Activated naive CD4-positive, alpha-beta T cell treated with anti-CD3 and anti-CD28 coated beads for 36 hours (primary cell): ENCODE measurements at regions of chr17 and their contacts with region 1.

Region 1: GRCh38 chr17:44070455-44071197 is at the start of gene G6PC3:
- DNase-seq: peak; percentile 94
- H3K4me3 Mint-ChIP-seq: peak within 1 kb of the TSS; percentile 98
- H3K27ac Mint-ChIP-seq: peak within 1 kb of the TSS; percentile 96
- H3K4me1 Mint-ChIP-seq: peaks cover 42% of the 10 kb centered on the region
- H3K27me3 Mint-ChIP-seq: no peaks in the 10 kb centered on the region
- total RNA-seq, gene G6PC3: 15.9 to 19.4 TPM

Region 2: GRCh38 chr17:43517615-43518386 is 552.8 kb before region 1 on chr17:
- CTCF ChIA-PET with region 1: no interaction called
- intact Hi-C with region 1: no loop called
- DNase-seq: peak; percentile 35
- H3K4me3 Mint-ChIP-seq: no peak overlapping the region
- H3K27ac Mint-ChIP-seq: no peak overlapping the region
- H3K4me1 Mint-ChIP-seq: peaks cover 8% of the 10 kb centered on the region
- H3K27me3 Mint-ChIP-seq: no peaks in the 10 kb centered on the region

Region 3: DNA sequence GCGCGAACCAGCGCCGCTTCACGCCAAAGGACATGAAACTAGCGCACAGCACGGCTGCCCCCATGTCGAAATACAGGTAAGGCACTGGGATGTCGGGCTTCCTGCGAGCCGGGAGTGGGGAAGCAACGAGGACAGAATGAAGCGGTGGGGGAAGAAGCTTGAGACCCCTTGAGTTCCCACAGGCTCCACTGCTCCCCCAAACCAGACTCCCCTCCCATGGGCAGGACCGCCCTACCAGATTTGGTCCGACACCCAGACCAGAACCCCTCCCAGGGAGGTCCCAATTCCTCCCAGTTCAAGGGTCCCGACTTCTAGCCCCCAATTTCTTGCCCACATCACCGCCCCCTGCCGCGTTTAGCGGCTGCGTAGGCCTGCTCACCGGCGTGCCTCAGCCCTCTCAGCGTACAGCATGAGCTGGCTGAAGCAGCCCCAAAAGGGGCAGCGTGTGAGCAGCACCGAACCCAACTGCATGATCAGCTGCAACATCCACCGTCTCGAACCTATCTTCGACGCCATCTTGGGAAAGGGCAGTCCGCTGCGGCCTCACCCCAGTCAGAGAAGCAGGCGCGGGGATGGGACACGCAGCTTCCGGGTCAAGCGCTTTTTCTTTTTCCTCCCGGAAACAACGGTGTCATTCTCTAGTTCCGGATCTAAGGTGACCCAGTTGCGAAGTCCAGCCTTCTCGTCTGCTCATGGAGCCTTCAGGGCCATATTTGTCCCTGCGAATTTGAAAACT is 56.0 kb before region 1 on chr17 and contains the start of gene TMEM101:
- CTCF ChIA-PET with region 1: no interaction called
- intact Hi-C with region 1: loop called (anchors 2 kb)
- DNase-seq: peak; percentile 93
- H3K4me3 Mint-ChIP-seq: peak within 1 kb of the TSS; percentile 100
- H3K27ac Mint-ChIP-seq: peak within 1 kb of the TSS; percentile 90
- H3K4me1 Mint-ChIP-seq: peaks cover 12% of the 10 kb centered on the region
- H3K27me3 Mint-ChIP-seq: no peaks in the 10 kb centered on the region
- total RNA-seq, gene TMEM101: 25.6 to 26.7 TPM

Region 4: DNA sequence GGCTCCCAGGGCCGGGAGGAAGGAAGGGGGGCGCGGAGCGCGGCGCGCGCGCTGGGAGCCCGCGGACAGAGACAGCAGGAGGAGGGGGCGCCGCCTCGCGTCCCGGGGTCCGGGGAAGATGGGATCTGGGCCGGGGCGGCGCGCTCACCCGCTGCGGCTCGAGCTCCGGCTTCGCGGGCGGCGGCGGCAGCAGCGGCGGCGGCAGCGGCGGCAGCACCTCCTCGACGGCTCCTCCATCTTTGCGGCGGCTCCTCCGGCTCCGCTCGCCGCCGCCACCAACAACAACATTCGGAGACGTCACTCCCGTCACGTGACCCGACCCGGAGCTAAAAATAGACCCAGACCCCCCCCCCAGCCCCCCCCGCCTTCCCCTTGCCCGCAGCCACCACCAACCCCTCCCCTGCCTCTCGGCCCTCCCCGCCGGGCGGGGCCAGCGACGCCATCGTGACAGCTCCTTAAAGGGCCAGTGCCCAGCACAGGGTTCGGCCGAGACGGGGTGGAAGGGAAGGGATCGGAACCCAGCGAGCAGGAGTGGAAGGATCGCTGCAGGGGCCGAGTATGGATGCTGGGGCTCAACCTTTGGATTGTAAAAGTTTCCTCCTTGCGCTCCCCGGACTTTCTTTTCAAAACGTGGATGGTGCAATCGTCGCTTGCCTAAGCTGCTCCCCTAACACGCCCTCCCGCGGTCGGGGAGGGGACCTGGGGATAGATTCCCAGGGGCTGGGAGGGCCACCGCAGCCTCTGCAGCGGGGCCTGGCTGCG is 52.9 kb after region 1 on chr17 and contains the start of gene HDAC5:
- CTCF ChIA-PET with region 1: interaction called, 4 read pairs
- intact Hi-C with region 1: loop called (anchors 1 kb)
- DNase-seq: peak; percentile 97
- H3K4me3 Mint-ChIP-seq: peak within 1 kb of the TSS; percentile 96
- H3K27ac Mint-ChIP-seq: peak within 1 kb of the TSS; percentile 97
- H3K4me1 Mint-ChIP-seq: peaks cover 32% of the 10 kb centered on the region
- H3K27me3 Mint-ChIP-seq: no peaks in the 10 kb centered on the region
- total RNA-seq, gene HDAC5: 17.9 to 18.9 TPM

Region 5: GRCh38 chr17:44186307-44187130 is 115.9 kb after region 1 on chr17 and contains the start of gene TMUB2:
- CTCF ChIA-PET with region 1: no interaction called
- intact Hi-C with region 1: loop called (anchors 1 kb)
- DNase-seq: peak; percentile 100
- H3K4me3 Mint-ChIP-seq: peak within 1 kb of the TSS; percentile 100
- H3K27ac Mint-ChIP-seq: peak within 1 kb of the TSS; percentile 99
- H3K4me1 Mint-ChIP-seq: peaks cover 43% of the 10 kb centered on the region
- H3K27me3 Mint-ChIP-seq: no peaks in the 10 kb centered on the region
- total RNA-seq, gene TMUB2: 21.2 to 22.9 TPM

Region 6: GRCh38 chr17:44344939-44345453 is 274.4 kb after region 1 on chr17 and contains the start of gene GRN:
- CTCF ChIA-PET with region 1: no interaction called
- intact Hi-C with region 1: loop called (anchors 5 kb)
- DNase-seq: peak; percentile 93
- H3K4me3 Mint-ChIP-seq: peak within 1 kb of the TSS; percentile 73
- H3K27ac Mint-ChIP-seq: peak within 1 kb of the TSS; percentile 43
- H3K4me1 Mint-ChIP-seq: peaks cover 10% of the 10 kb centered on the region
- H3K27me3 Mint-ChIP-seq: no peaks in the 10 kb centered on the region
- total RNA-seq, gene GRN: 47.1 to 50.5 TPM